HepG2 (cell line): ENCODE measurements at regions of chr14 and their contacts with region 1.

Region 1: DNA sequence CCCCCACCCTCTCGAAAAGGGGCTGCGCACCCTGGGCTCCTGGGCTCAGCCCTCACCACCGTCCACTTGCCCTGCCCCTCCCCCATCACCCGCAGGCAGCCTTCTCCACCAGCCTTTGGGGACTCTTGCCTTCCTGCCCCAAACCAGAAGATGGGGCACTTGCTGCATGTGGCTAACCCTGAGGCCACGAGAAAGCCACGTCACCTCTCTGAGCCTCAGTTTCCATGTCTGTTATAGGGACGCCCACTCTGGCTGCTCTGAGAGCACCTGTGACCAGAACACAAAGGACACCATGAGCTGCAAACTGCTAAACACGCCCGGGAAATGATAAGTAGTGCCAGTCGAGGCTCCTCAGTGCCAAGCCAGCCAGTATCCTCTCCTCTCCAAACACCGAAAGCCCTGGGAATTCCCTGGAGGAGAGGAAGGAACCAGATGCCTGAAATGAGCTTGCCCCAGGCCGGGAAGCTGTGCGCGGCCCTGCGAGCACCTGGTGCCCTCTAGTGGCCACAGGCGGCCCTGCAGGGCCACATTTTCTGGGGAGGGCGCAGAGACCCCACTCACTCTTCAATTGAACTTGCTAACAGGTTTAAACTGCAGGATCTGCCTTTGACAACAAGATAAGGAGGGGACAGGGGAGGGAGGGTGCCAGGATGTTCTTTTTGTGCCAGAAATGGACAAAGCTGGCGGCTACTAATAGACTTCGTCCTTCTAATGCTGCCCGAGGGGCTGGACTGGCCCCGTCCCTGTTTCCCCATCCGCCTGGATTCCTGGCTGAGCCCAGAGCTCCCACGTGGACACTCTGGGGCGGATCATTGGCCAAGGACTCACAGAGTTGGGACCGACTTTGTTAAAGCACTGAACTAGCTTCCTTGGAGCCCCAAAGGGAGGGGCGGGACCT is 10.2 kb upstream of the SERPINA9 start:
- DNase-seq: peak; percentile 48
- ATAC-seq: peak; percentile 62
- H3K4me3 ChIP-seq: peak overlapping the region in 1 of 3 experiments; percentile 30; a peak in 1 of 6 replicates
- H3K27ac ChIP-seq: peak overlapping the region; percentile 32
- H3K4me1 ChIP-seq: peaks cover 92% of the 10 kb centered on the region
- H3K27me3 ChIP-seq: no peaks in the 10 kb centered on the region
- CTCF ChIP-seq: peak; percentile 96
- EP300 ChIP-seq: 0 out of 4 replicates have a peak, but pooled peaks of 1 of the 2 experiments have one; percentile 9
- POLR2A ChIP-seq: no peak
- RAD21 ChIP-seq: peak; percentile 98

Region 2: DNA sequence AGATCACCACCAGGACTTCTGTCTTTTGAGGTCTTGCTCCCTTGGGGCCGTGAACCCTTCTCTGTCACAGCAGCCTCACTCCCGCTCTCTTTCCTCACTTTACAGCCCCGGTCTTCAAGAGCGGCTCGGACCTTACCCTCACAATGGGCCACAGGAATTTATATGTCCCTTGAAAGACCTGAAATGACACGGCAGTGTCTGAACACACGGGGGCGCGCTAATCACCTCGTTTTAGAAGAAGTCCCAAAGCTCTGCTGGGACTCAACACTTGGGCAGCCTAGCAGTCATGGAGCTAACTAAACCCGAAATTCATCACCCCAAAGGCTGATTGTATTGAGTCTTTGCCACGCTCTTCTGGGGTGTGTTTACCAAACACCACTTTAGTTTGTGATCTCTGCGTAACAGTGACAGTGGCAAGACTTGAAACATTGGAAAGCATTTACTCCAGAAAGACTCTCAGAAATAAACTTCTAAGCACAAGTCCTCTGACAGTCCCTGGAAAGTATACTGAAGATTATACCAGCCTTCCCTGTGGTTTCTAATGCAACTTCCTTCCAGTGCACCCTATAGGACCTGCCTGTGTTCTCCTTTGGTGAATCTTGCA is 62.6 kb before region 1 on chr14:
- CTCF ChIA-PET with region 1: interaction called, 18 read pairs
- POLR2A ChIA-PET with region 1: interaction called, 6 read pairs
- in situ Hi-C with region 1: no loop called
- intact Hi-C with region 1: no loop called
- DNase-seq: peak; percentile 80
- ATAC-seq: peak; percentile 91
- H3K4me3 ChIP-seq: 0 out of 6 replicates have a peak overlapping the region, but pooled peaks of 1 of the 3 experiments have one; percentile 38
- H3K27ac ChIP-seq: no peak overlapping the region
- H3K4me1 ChIP-seq: peaks cover 32% of the 10 kb centered on the region
- H3K27me3 ChIP-seq: no peaks in the 10 kb centered on the region
- CTCF ChIP-seq: peak; percentile 90
- EP300 ChIP-seq: no peak
- POLR2A ChIP-seq: no peak
- RAD21 ChIP-seq: peak; percentile 76

Region 3: DNA sequence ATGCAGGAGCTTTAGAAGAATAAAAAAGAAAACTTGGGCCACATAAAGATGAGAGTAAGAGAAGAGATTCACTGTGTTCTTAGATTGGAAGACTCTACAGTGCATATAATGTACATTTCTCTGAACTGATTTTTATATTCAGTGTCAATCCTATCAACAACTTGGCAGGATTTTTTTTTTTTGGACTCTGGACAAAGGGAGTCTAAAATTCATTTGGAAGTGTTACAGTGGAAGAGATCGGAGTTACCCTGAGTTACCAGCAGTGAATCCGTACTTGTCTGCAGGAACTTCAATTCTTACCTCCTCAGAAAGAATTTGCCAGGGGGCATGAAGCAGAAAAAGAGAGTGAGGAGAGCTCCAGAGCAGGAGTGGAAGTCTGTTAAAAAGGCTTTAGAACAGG is 57.6 kb before region 1 on chr14:
- CTCF ChIA-PET with region 1: interaction called, 82 read pairs
- POLR2A ChIA-PET with region 1: interaction called, 36 read pairs
- in situ Hi-C with region 1: no loop called
- intact Hi-C with region 1: no loop called
- DNase-seq: no peak
- ATAC-seq: no peak
- H3K4me3 ChIP-seq: no peak overlapping the region
- H3K27ac ChIP-seq: no peak overlapping the region
- H3K4me1 ChIP-seq: peaks cover 43% of the 10 kb centered on the region
- H3K27me3 ChIP-seq: no peaks in the 10 kb centered on the region
- CTCF ChIP-seq: no peak
- EP300 ChIP-seq: no peak
- POLR2A ChIP-seq: no peak
- RAD21 ChIP-seq: no peak

Region 4: DNA sequence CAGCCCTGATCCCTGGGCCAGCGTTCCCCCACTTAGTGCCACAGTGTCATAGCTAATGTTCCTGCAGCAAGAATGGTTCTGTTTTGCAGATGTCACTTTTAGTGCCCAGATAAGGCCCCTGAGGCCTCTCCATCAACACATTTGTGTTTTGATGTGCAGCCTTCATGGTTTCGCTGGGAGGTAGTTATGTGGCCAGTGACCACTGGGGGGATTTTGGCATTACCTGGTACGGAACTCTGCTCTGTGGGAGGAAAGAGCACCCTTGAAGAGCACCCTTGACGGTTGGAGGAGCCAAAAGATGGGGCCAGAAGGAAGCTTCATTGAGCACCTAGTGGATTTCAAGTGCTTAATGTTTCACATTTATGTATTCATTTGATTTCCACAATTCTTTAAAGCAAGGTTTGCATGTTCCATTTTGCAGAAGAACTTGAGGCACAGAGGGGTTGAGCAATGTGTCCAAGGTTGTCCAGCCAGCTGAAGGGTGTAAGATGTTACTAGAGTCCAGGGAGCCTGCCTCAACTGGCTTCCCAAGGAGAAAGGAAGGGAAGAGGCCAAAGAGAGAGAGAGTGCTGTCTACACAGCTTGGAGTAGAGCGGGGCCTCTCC is 46.6 kb before region 1 on chr14:
- CTCF ChIA-PET with region 1: interaction called, 82 read pairs
- POLR2A ChIA-PET with region 1: interaction called, 4 read pairs
- in situ Hi-C with region 1: loop called (anchors 5 kb)
- intact Hi-C with region 1: loop called (anchors 1 kb)
- DNase-seq: no peak
- ATAC-seq: peak; percentile 66
- H3K4me3 ChIP-seq: no peak overlapping the region
- H3K27ac ChIP-seq: no peak overlapping the region
- H3K4me1 ChIP-seq: peaks cover 19% of the 10 kb centered on the region
- H3K27me3 ChIP-seq: no peaks in the 10 kb centered on the region
- CTCF ChIP-seq: no peak
- EP300 ChIP-seq: no peak
- POLR2A ChIP-seq: peak in 1 of 2 experiments; percentile 35; a peak in 1 of 4 replicates
- RAD21 ChIP-seq: no peak

Region 5: DNA sequence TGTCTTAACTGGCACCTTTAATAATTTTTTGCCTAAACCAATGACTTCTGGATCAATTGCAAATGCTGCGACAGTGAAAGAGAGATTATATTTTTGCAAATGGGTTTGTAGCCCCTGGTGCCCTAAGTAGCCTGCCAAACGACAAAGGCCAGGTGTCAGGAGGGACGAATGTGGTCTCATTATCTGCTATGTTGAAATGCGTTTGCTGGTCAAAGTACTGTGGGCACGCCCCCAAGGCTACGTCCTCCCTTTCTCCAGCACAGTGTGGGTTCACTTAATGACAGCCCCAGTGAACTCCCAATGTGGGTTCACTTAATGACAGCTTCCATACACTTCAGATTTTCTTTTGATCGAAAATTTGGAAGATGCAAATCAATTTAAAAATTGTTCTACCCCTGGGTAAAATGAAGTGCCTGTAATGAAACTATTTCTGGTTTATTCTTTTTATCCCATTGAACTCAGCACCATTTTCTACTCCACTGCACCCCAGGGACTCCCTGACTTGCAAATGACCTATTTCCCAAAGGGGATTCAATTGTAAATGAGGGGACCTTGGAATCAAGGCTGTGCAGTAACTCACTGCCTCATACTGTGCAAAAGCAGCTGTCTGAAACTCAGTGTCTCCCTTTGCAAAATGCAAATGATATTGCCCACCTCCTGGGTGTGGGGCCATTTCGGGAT is 35.0 kb before region 1 on chr14:
- CTCF ChIA-PET with region 1: no interaction called
- POLR2A ChIA-PET with region 1: interaction called, 15 read pairs
- in situ Hi-C with region 1: no loop called
- intact Hi-C with region 1: loop called (anchors 1 kb)
- DNase-seq: peak; percentile 85
- ATAC-seq: peak; percentile 83
- H3K4me3 ChIP-seq: peak overlapping the region; percentile 63 to 79 (median 73)
- H3K27ac ChIP-seq: peak overlapping the region; percentile 99
- H3K4me1 ChIP-seq: peaks cover 95% of the 10 kb centered on the region
- H3K27me3 ChIP-seq: no peaks in the 10 kb centered on the region; a peak in 1 of 5 replicates
- CTCF ChIP-seq: 0 out of 2 replicates have a peak, but pooled peaks have one; percentile 14
- EP300 ChIP-seq: peak in 1 of 2 experiments; percentile 83; a peak in 2 of 4 replicates
- POLR2A ChIP-seq: peak; percentile 25 to 60; a peak in 2 of 4 replicates
- RAD21 ChIP-seq: peak; percentile 9; the same call in 1 of the 2 replicates